ENCODE measurements at regions of chr17 and their contacts with region 1.

Region 1: GRCh38 chr17:75779231-75779986 is 5.2 kb upstream of the UNK start:
- DNase-seq: peak; percentile 97 to 99
- H3K4me3 ChIP-seq: peak overlapping the region; percentile 85
- H3K4me3 Mint-ChIP-seq: peak overlapping the region; percentile 100
- H3K27ac Mint-ChIP-seq: peak overlapping the region; percentile 100
- H3K4me1 ChIP-seq: peaks cover 21% of the 10 kb centered on the region
- H3K4me1 Mint-ChIP-seq: peaks cover 28% of the 10 kb centered on the region
- H3K27me3 ChIP-seq: no peaks in the 10 kb centered on the region
- H3K27me3 Mint-ChIP-seq: peaks cover 4% of the 10 kb centered on the region
- CTCF ChIP-seq: no peak

Region 2: GRCh38 chr17:75012346-75013091 is 766.9 kb before region 1 on chr17 and contains the start of gene MRPL58:
- CTCF ChIA-PET with region 1: no interaction called
- POLR2A ChIA-PET with region 1: no interaction called
- intact Hi-C with region 1: no loop called
- DNase-seq: peak; percentile 88 to 92
- H3K4me3 ChIP-seq: peak within 1 kb of the TSS; percentile 84
- H3K4me3 Mint-ChIP-seq: peak within 1 kb of the TSS; percentile 82
- H3K27ac Mint-ChIP-seq: peak within 1 kb of the TSS; percentile 84
- H3K4me1 ChIP-seq: peaks cover 3% of the 10 kb centered on the region; the same call in 1 of the 2 replicates
- H3K4me1 Mint-ChIP-seq: peaks cover 29% of the 10 kb centered on the region
- H3K27me3 ChIP-seq: no peaks in the 10 kb centered on the region
- H3K27me3 Mint-ChIP-seq: no peaks in the 10 kb centered on the region
- CTCF ChIP-seq: peak; percentile 68 to 79
- total RNA-seq, gene MRPL58: 61.0 and 61.8 TPM in 2 replicates

Region 3: GRCh38 chr17:75645889-75646637 is 133.3 kb before region 1 on chr17:
- CTCF ChIA-PET with region 1: interaction called, 3 read pairs
- POLR2A ChIA-PET with region 1: interaction called, 17 read pairs
- intact Hi-C with region 1: no loop called
- DNase-seq: peak; percentile 96 to 97
- H3K4me3 ChIP-seq: 0 out of 2 replicates have a peak overlapping the region, but pooled peaks have one; percentile 5
- H3K4me3 Mint-ChIP-seq: peak overlapping the region; percentile 43
- H3K27ac Mint-ChIP-seq: peak overlapping the region; percentile 96
- H3K4me1 ChIP-seq: peaks cover 48% of the 10 kb centered on the region
- H3K4me1 Mint-ChIP-seq: peaks cover 23% of the 10 kb centered on the region
- H3K27me3 ChIP-seq: no peaks in the 10 kb centered on the region
- H3K27me3 Mint-ChIP-seq: no peaks in the 10 kb centered on the region
- CTCF ChIP-seq: peak in 1 of 2 experiments; percentile 2

Region 4: DNA sequence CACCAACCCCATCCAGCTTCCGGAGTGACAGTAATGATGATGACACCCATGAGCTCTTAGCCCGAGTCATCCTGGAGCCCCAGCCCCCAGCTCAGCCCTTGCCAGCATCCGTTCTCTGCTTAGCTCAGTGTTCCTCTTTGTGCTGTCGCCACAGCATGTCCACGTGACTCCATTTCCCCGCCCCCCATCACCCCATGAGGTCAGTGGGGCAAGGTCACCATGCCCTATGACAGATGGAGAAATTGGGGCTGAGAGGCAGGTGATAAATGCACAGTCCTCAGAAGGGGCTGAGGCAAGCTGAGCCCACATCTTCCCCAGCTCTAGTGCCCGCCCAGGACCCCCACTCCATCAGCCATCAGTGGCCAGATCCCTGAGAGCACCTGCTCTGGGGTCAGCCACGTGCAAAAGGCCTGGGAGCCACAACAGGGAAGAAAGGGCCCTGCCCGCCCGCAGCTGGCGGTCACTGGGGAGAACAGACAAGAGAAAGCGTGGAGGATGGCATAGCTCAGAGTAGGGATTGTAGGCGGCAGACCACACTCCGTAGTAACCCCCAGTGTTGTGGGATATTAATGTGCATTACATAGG is 41.1 kb before region 1 on chr17:
- CTCF ChIA-PET with region 1: no interaction called
- POLR2A ChIA-PET with region 1: no interaction called
- intact Hi-C with region 1: no loop called
- DNase-seq: no peak
- H3K4me3 ChIP-seq: no peak overlapping the region
- H3K4me3 Mint-ChIP-seq: no peak overlapping the region
- H3K27ac Mint-ChIP-seq: no peak overlapping the region
- H3K4me1 ChIP-seq: no peaks in the 10 kb centered on the region
- H3K4me1 Mint-ChIP-seq: no peaks in the 10 kb centered on the region
- H3K27me3 ChIP-seq: no peaks in the 10 kb centered on the region
- H3K27me3 Mint-ChIP-seq: no peaks in the 10 kb centered on the region
- CTCF ChIP-seq: no peak

Region 5: GRCh38 chr17:75764711-75765421 is 14.5 kb before region 1 on chr17 and contains the start of gene GALK1:
- CTCF ChIA-PET with region 1: interaction called, 27 read pairs
- POLR2A ChIA-PET with region 1: interaction called, 49 read pairs
- intact Hi-C with region 1: loop called (anchors 1 kb)
- DNase-seq: peak; percentile 73 to 81
- H3K4me3 ChIP-seq: peak within 1 kb of the TSS; percentile 75
- H3K4me3 Mint-ChIP-seq: peak within 1 kb of the TSS; percentile 75
- H3K27ac Mint-ChIP-seq: peak within 1 kb of the TSS; percentile 75
- H3K4me1 ChIP-seq: peaks cover 24% of the 10 kb centered on the region
- H3K4me1 Mint-ChIP-seq: peaks cover 5% of the 10 kb centered on the region
- H3K27me3 ChIP-seq: no peaks in the 10 kb centered on the region
- H3K27me3 Mint-ChIP-seq: no peaks in the 10 kb centered on the region
- CTCF ChIP-seq: peak; percentile 65 to 73
- total RNA-seq, gene GALK1: 41.1 and 45.0 TPM in 2 replicates

Region 6: DNA sequence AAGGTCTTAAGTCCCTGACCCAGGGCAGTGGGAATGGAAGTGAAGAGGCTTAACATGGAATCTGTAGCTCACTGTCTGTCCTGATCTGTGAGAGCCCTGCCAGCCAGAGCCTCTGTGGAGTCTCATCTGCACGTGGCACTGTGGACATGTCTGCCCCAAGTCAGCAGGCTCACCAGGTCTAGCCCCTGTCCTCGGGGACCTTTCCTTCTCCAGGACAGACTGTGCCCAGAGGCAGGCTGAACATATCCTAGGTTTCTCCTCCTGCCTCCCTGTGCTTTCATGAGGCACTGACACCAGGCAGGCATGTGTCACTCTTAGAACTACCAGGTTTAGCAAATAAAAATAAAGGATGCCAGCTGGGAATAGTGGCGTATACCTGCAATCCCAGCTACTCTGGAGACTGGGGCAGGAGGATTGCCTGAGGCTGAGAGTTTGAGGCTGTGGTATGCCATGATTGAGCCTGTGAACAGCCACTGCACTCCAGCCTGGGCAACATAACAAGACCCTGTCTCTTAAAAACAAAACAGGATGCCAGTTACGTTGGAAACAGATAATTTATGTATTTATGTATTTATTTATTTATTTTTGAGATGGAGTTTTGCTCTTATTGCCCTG is 27.6 kb after region 1 on chr17:
- CTCF ChIA-PET with region 1: interaction called, 3 read pairs
- POLR2A ChIA-PET with region 1: interaction called, 10 read pairs
- intact Hi-C with region 1: no loop called
- DNase-seq: peak in 1 of 2 experiments; percentile 20
- H3K4me3 ChIP-seq: no peak overlapping the region
- H3K4me3 Mint-ChIP-seq: no peak overlapping the region
- H3K27ac Mint-ChIP-seq: no peak overlapping the region
- H3K4me1 ChIP-seq: peaks cover 9% of the 10 kb centered on the region
- H3K4me1 Mint-ChIP-seq: peaks cover 13% of the 10 kb centered on the region
- H3K27me3 ChIP-seq: no peaks in the 10 kb centered on the region
- H3K27me3 Mint-ChIP-seq: no peaks in the 10 kb centered on the region
- CTCF ChIP-seq: no peak

Region 7: GRCh38 chr17:75845049-75845860 is 65.8 kb after region 1 on chr17:
- CTCF ChIA-PET with region 1: no interaction called
- POLR2A ChIA-PET with region 1: interaction called, 15 read pairs
- intact Hi-C with region 1: no loop called
- DNase-seq: peak; percentile 85 to 89
- H3K4me3 ChIP-seq: no peak overlapping the region
- H3K4me3 Mint-ChIP-seq: peak overlapping the region; percentile 54
- H3K27ac Mint-ChIP-seq: peak overlapping the region; percentile 93
- H3K4me1 ChIP-seq: peaks cover 41% of the 10 kb centered on the region
- H3K4me1 Mint-ChIP-seq: peaks cover 26% of the 10 kb centered on the region
- H3K27me3 ChIP-seq: no peaks in the 10 kb centered on the region
- H3K27me3 Mint-ChIP-seq: no peaks in the 10 kb centered on the region
- CTCF ChIP-seq: peak; percentile 72 to 86

Measured in Caco-2 (cell line).